Naive thymus-derived CD4-positive, alpha-beta T cell (primary cell): ENCODE measurements at regions of chr10 and their contacts with region 1.

Region 1: DNA sequence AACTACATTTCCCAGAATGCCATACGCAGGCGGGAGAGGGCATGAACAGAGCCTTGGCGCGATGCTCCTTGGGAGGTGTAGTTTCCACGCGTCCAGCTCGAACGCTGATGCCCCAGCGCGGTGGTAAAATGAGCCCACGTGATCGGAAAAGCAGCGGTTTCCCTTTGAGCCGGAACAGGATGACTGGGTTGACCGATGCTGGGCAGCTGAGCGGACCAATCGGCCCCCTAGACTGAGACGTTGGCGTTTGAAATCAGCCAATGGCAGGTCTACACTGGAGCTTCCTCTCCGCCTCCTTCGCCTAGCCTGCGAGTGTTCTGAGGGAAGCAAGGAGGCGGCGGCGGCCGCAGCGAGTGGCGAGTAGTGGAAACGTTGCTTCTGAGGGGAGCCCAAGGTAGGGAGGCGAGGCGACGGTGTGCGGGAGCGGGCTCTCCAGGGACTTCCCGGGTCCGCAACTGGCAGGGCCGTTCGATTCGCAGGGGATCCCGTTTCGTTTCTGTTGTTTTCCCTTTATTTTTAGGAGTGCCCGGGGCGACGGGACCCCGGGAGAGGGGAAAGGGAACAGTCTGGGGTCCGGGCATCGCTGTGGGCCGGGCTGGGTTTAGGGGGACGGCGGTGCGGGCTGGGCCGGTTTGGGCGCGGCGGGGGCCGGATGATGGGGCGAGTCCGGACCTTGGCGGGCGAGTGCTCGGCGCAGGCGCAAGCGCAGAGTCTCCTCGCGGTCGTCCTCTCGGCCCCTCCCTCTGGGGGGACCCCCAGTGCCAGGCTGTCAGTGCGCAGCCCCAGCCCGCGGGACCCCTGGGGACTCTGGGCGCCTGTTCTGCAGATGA is at the start of gene BUB3:
- DNase-seq: peak; percentile 72 to 96 (median 94)
- ATAC-seq: peak; percentile 95
- H3K4me3 ChIP-seq: peak within 1 kb of the TSS; percentile 92
- H3K4me3 Mint-ChIP-seq: peak within 1 kb of the TSS; percentile 93 to 100 (median 99)
- H3K27ac ChIP-seq: peak within 1 kb of the TSS; percentile 80
- H3K27ac Mint-ChIP-seq: peak within 1 kb of the TSS; percentile 85 to 100 (median 96)
- H3K4me1 ChIP-seq: peaks cover 28 to 66% of the 10 kb centered on the region in 2 donors
- H3K4me1 Mint-ChIP-seq: peaks cover 35 to 85% (median 75%) of the 10 kb centered on the region in 7 donors
- H3K27me3 ChIP-seq: peaks cover 4 to 5% of the 10 kb centered on the region in 2 donors
- H3K27me3 Mint-ChIP-seq: peaks cover under 1 to 30% (median 7%) of the 10 kb centered on the region in 5 donors
- total RNA-seq, gene BUB3: 91.4 to 195 (median 171) TPM

Region 2: GRCh38 chr10:122374237-122374869 is 780.0 kb before region 1 on chr10 and contains the start of gene PLEKHA1:
- CTCF ChIA-PET with region 1: no interaction called
- POLR2A ChIA-PET with region 1: interaction called, 3 read pairs
- intact Hi-C with region 1: loop called in 1 of 2 experiments (anchors 1 kb)
- DNase-seq: peak; percentile 91 to 93 (median 92)
- ATAC-seq: peak; percentile 93
- H3K4me3 ChIP-seq: peak within 1 kb of the TSS; percentile 90
- H3K4me3 Mint-ChIP-seq: peak within 1 kb of the TSS; percentile 91 to 99 (median 96)
- H3K27ac ChIP-seq: peak within 1 kb of the TSS; percentile 98
- H3K27ac Mint-ChIP-seq: peak within 1 kb of the TSS; percentile 81 to 98 (median 93)
- H3K4me1 ChIP-seq: peaks cover 6 to 23% of the 10 kb centered on the region in 2 donors
- H3K4me1 Mint-ChIP-seq: peaks cover 21 to 51% (median 37%) of the 10 kb centered on the region in 7 donors
- H3K27me3 ChIP-seq: no peaks in the 10 kb centered on the region
- H3K27me3 Mint-ChIP-seq: peaks cover 0 to 71% (median 5%) of the 10 kb centered on the region in 5 donors
- total RNA-seq, gene PLEKHA1: 5.9 to 90.1 (median 39.2) TPM

Region 3: DNA sequence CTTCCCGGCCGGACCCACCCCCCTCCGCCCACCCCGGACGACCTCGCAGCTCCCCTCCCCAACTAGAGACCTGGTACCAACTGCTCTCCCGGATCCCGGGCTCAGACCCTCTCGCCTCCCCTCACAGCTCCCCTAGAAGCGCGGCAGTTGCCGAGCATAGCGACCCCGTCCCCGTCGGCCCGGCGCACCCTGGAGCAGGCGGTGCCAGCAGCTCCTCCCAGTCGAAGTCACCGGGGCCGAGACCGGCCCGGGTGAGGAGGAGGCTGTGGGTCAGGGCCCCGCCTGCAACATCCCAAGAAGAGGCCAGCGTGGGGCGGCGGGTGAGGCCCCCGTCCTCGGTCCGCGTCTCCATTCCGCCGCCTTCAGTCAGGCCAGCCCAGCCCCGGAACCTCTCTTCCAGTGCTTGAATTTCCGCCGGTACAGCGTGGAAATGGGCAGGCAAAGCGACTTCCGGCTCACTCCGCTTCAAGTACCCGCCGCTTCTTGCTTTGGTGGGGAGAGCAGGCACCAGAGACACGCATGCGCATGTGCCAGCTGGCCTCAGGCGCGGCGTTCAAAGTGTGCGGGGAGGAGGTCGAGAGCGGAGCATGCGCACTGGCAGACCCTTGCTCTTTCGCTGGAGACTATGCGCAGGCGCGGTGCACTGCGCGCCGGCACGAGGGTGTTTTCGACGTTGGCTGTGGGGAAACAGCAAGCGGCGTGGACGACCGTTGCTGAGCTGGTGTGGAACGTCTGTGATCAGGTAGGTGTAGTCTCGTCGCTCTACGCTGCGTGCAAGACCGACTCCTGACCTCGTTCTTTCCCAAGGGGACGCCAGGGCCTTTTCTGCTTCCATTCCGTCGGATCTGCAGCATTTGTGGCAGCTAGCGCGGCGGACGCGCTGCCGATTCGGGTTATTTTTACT is 200.2 kb before region 1 on chr10 and contains the start of gene C10orf88:
- CTCF ChIA-PET with region 1: no interaction called
- POLR2A ChIA-PET with region 1: interaction called, 7 read pairs
- intact Hi-C with region 1: loop called (anchors 1 kb)
- DNase-seq: peak; percentile 92 to 98 (median 97)
- ATAC-seq: peak; percentile 97
- H3K4me3 ChIP-seq: peak within 1 kb of the TSS; percentile 69
- H3K4me3 Mint-ChIP-seq: peak within 1 kb of the TSS; percentile 85 to 96 (median 90)
- H3K27ac ChIP-seq: peak within 1 kb of the TSS; percentile 72
- H3K27ac Mint-ChIP-seq: peak within 1 kb of the TSS; percentile 77 to 98 (median 90)
- H3K4me1 ChIP-seq: peaks cover 16% of the 10 kb centered on the region in 2 donors
- H3K4me1 Mint-ChIP-seq: peaks cover 26 to 60% (median 39%) of the 10 kb centered on the region in 7 donors
- H3K27me3 ChIP-seq: no peaks in the 10 kb centered on the region
- H3K27me3 Mint-ChIP-seq: peaks cover 0 to 14% (median 0%) of the 10 kb centered on the region in 5 donors
- total RNA-seq, gene C10orf88: 5.2 to 16.8 (median 12.5) TPM

Region 4: DNA sequence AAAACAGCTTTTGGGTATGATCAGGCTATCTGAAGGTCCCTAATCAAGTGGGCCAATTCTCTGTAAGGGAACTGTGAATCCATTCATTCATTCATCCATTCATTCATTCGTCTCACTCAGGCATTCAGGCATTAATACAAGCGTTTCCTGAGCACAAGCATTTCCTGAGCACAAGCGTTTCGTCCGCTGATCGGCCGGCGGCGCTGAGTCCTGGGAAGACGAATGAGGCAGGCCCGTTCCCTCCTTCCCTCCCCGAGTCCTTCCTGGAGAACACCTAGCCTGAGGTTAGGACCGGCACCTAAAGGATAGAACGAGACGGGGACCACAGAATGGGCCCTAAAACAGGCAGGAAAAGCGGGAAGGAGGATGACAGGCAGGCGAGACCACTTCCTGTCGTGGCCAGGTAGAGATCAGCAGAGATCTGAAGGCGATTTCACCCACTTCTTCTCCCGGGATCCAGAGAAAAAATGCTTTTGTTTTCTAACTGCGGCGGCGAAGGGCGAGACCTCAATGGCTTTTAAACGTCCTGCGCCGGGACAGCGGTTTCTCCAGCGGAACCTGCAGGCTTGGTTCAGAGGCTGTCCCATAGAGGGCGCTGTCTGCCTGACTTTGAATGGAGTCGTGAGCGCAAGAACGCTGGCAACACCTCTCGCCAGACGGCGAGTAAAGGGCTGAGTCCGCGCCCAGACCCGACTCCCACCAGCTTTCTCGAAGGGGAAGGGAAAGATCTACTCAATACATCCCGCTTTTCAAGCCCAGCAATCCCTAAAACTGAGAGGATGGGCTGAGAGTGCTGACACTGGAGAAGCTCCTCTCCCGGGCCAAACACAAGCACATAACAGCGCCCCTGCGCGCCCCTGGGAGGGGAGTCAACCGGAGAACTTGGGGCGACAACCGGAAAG is 21.5 kb before region 1 on chr10:
- CTCF ChIA-PET with region 1: interaction called, 6 read pairs
- POLR2A ChIA-PET with region 1: interaction called, 3 read pairs
- intact Hi-C with region 1: loop called (anchors 1 kb)
- DNase-seq: peak; percentile 63 to 84 (median 79)
- ATAC-seq: peak; percentile 85
- H3K4me3 ChIP-seq: peak overlapping the region; percentile 36
- H3K4me3 Mint-ChIP-seq: peak overlapping the region; percentile 39 to 79 (median 72)
- H3K27ac ChIP-seq: no peak overlapping the region
- H3K27ac Mint-ChIP-seq: peak overlapping the region in 4 of 9 donors; percentile 5 to 82 (median 42)
- H3K4me1 ChIP-seq: peaks cover 20 to 42% of the 10 kb centered on the region in 2 donors
- H3K4me1 Mint-ChIP-seq: peaks cover 6 to 32% (median 26%) of the 10 kb centered on the region in 7 donors
- H3K27me3 ChIP-seq: peaks cover 16 to 37% of the 10 kb centered on the region in 2 donors
- H3K27me3 Mint-ChIP-seq: peaks cover 62 to 82% (median 68%) of the 10 kb centered on the region in 5 donors

Region 5: GRCh38 chr10:124221356-124222317 is 1067.3 kb after region 1 on chr10:
- CTCF ChIA-PET with region 1: no interaction called
- POLR2A ChIA-PET with region 1: no interaction called
- intact Hi-C with region 1: loop called in 1 of 2 experiments (anchors 5 kb)
- DNase-seq: no peak
- ATAC-seq: no peak
- H3K4me3 ChIP-seq: no peak overlapping the region
- H3K4me3 Mint-ChIP-seq: peak overlapping the region in 1 of 10 donors; percentile 37
- H3K27ac ChIP-seq: no peak overlapping the region
- H3K27ac Mint-ChIP-seq: peak overlapping the region in 1 of 9 donors; percentile 33
- H3K4me1 ChIP-seq: no peaks in the 10 kb centered on the region
- H3K4me1 Mint-ChIP-seq: peaks cover 0 to 25% (median 0%) of the 10 kb centered on the region in 7 donors
- H3K27me3 ChIP-seq: no peaks in the 10 kb centered on the region
- H3K27me3 Mint-ChIP-seq: peaks cover 0 to 14% (median 5%) of the 10 kb centered on the region in 5 donors

Region 6: GRCh38 chr10:124461438-124462347 is 1307.4 kb after region 1 on chr10 and contains the start of gene LHPP:
- CTCF ChIA-PET with region 1: no interaction called
- POLR2A ChIA-PET with region 1: interaction called, 3 read pairs
- intact Hi-C with region 1: loop called (anchors 1 kb)
- DNase-seq: peak; percentile 77 to 91 (median 87)
- ATAC-seq: peak; percentile 98
- H3K4me3 ChIP-seq: peak within 1 kb of the TSS; percentile 76
- H3K4me3 Mint-ChIP-seq: peak within 1 kb of the TSS; percentile 69 to 96 (median 90)
- H3K27ac ChIP-seq: peak within 1 kb of the TSS; percentile 76
- H3K27ac Mint-ChIP-seq: peak within 1 kb of the TSS; percentile 82 to 98 (median 96)
- H3K4me1 ChIP-seq: peaks cover 13 to 21% of the 10 kb centered on the region in 2 donors
- H3K4me1 Mint-ChIP-seq: peaks cover 23 to 35% (median 28%) of the 10 kb centered on the region in 7 donors
- H3K27me3 ChIP-seq: no peaks in the 10 kb centered on the region
- H3K27me3 Mint-ChIP-seq: peaks cover 0 to 17% (median 11%) of the 10 kb centered on the region in 5 donors
- total RNA-seq, gene LHPP: 19.8 to 31.2 (median 27.6) TPM

Region 7: DNA sequence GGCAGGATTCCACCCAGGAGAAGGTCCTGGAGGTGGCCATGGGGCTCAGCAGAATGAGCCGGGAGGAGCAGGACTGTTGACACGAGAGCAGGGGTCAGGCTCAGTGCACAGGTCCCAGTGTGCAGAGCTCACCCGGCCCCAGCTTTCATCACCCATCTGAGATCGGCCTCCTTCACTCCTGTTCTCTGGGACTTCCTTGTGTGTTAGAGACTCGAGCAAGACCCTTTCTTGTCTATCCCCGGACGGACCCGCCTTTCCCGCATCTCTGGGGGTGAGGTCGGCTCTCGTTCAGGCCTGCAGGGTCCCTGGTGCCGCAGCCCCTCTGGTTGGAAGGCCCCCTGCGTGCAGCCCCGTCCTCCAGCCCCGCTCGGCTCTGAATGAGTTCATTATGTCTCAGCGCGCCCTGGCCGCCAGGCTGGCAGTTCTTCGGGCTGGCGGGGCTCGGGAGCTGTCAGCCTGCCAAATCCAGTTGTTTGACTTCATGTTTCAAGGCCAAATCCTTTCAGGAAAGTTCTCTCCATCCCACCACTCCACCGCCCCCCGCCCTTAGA is 1435.3 kb after region 1 on chr10:
- CTCF ChIA-PET with region 1: no interaction called
- POLR2A ChIA-PET with region 1: no interaction called
- intact Hi-C with region 1: no loop called
- DNase-seq: no peak
- ATAC-seq: no peak
- H3K4me3 ChIP-seq: no peak overlapping the region
- H3K4me3 Mint-ChIP-seq: no peak overlapping the region
- H3K27ac ChIP-seq: no peak overlapping the region
- H3K27ac Mint-ChIP-seq: no peak overlapping the region
- H3K4me1 ChIP-seq: no peaks in the 10 kb centered on the region
- H3K4me1 Mint-ChIP-seq: peaks cover 0 to 4% (median 0%) of the 10 kb centered on the region in 7 donors
- H3K27me3 ChIP-seq: no peaks in the 10 kb centered on the region
- H3K27me3 Mint-ChIP-seq: peaks cover 0 to 2% (median 0%) of the 10 kb centered on the region in 5 donors

Region 8: GRCh38 chr10:124916585-124917427 is 1762.5 kb after region 1 on chr10:
- CTCF ChIA-PET with region 1: no interaction called
- POLR2A ChIA-PET with region 1: no interaction called
- intact Hi-C with region 1: loop called in 1 of 2 experiments (anchors 2 kb)
- DNase-seq: peak; percentile 93 to 97 (median 96)
- ATAC-seq: peak; percentile 95
- H3K4me3 ChIP-seq: peak overlapping the region; percentile 97
- H3K4me3 Mint-ChIP-seq: peak overlapping the region; percentile 86 to 99 (median 94)
- H3K27ac ChIP-seq: peak overlapping the region; percentile 98
- H3K27ac Mint-ChIP-seq: peak overlapping the region; percentile 89 to 99 (median 94)
- H3K4me1 ChIP-seq: peaks cover 15 to 17% of the 10 kb centered on the region in 2 donors
- H3K4me1 Mint-ChIP-seq: peaks cover 30 to 49% (median 44%) of the 10 kb centered on the region in 7 donors
- H3K27me3 ChIP-seq: no peaks in the 10 kb centered on the region
- H3K27me3 Mint-ChIP-seq: peaks cover 0 to 8% (median 0%) of the 10 kb centered on the region in 5 donors